AG04449 (cell line): ENCODE measurements at regions of chr12 and their contacts with region 1.

Region 1: GRCh38 chr12:109844983-109845823 is 12.0 kb upstream of the TRPV4 start:
- DNase-seq: no peak
- H3K4me3 ChIP-seq: peak overlapping the region; percentile 54
- CTCF ChIP-seq: peak; percentile 98

Region 2: GRCh38 chr12:109518820-109519665 is 326.2 kb before region 1 on chr12:
- CTCF ChIA-PET with region 1: interaction called, 28 read pairs
- POLR2A ChIA-PET with region 1: no interaction called
- DNase-seq: peak; percentile 67
- H3K4me3 ChIP-seq: no peak overlapping the region
- CTCF ChIP-seq: peak; percentile 77

Region 3: GRCh38 chr12:109804820-109805761 is 40.1 kb before region 1 on chr12:
- CTCF ChIA-PET with region 1: interaction called, 275 read pairs
- POLR2A ChIA-PET with region 1: no interaction called
- DNase-seq: no peak
- H3K4me3 ChIP-seq: no peak overlapping the region
- CTCF ChIP-seq: peak; percentile 93

Region 4: DNA sequence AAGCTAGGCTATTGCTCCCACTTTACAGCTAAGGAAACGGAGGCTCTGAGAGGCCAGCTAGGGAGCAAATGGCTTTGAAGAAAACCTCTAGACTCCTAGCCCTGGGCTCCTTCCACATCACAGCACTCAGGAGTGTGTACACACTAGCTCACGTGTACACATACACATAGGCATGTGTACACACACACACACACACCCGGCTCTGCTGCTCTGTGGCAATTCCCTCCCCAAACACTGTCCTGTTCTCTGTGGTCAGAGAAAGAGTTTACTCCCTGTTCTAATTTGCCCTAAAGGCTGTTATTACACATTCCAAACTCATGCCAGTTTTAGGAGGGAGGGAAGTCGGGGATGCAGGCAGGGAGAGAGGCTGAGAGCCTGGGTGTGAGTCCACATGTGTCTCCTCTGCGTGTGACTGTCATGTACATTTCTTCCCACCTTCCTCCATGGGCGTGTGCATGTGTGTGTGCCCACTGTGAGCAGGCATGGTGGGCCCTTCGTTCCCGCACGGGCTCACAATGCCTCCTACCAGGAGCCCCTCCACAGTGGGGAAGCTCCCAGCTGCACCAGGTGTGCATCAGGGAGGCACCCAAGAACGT is 26.2 kb before region 1 on chr12:
- CTCF ChIA-PET with region 1: interaction called, 37 read pairs
- POLR2A ChIA-PET with region 1: no interaction called
- DNase-seq: peak; percentile 34
- H3K4me3 ChIP-seq: no peak overlapping the region
- CTCF ChIP-seq: no peak

Region 5: GRCh38 chr12:109858764-109859163 is 13.6 kb after region 1 on chr12:
- CTCF ChIA-PET with region 1: interaction called, 74 read pairs
- POLR2A ChIA-PET with region 1: no interaction called
- DNase-seq: no peak
- H3K4me3 ChIP-seq: no peak overlapping the region
- CTCF ChIP-seq: no peak

Region 6: DNA sequence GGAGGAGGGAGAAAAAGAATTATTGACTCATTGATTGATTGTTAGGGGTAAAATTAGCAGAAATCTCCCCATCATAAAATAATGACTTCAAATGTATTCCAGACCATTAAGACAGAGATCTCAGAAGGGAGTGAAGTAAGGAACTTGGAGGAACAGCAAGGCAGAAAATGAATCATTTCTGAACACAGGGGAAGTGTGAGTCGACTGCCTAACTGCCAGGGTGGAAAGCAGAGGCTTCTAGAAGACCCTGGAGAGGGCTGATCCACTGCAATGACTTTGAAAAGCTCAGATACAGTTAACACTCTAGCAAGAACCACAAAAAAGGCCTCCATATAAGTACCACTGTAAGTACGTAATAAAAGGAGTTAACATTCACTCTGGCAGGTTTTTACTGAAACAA is 25.4 kb after region 1 on chr12:
- CTCF ChIA-PET with region 1: interaction called, 23 read pairs
- POLR2A ChIA-PET with region 1: interaction called, 4 read pairs
- DNase-seq: no peak
- H3K4me3 ChIP-seq: no peak overlapping the region
- CTCF ChIP-seq: no peak